ENCODE measurements at regions of chr14 and their contacts with region 1.

Region 1: GRCh38 chr14:77067632-77068514 is 30.2 kb upstream of the CIPC start:
- DNase-seq: peak; percentile 74
- H3K4me3 Mint-ChIP-seq: no peak overlapping the region
- H3K27ac Mint-ChIP-seq: no peak overlapping the region
- H3K4me1 Mint-ChIP-seq: peaks cover 23% of the 10 kb centered on the region
- H3K27me3 Mint-ChIP-seq: no peaks in the 10 kb centered on the region
- CTCF ChIP-seq: peak; percentile 87

Region 2: GRCh38 chr14:76882651-76883050 is 185.2 kb before region 1 on chr14:
- CTCF ChIA-PET with region 1: interaction called, 523 read pairs
- POLR2A ChIA-PET with region 1: no interaction called
- intact Hi-C with region 1: no loop called
- DNase-seq: no peak
- H3K4me3 Mint-ChIP-seq: no peak overlapping the region
- H3K27ac Mint-ChIP-seq: no peak overlapping the region
- H3K4me1 Mint-ChIP-seq: no peaks in the 10 kb centered on the region
- H3K27me3 Mint-ChIP-seq: no peaks in the 10 kb centered on the region
- CTCF ChIP-seq: no peak

Region 3: DNA sequence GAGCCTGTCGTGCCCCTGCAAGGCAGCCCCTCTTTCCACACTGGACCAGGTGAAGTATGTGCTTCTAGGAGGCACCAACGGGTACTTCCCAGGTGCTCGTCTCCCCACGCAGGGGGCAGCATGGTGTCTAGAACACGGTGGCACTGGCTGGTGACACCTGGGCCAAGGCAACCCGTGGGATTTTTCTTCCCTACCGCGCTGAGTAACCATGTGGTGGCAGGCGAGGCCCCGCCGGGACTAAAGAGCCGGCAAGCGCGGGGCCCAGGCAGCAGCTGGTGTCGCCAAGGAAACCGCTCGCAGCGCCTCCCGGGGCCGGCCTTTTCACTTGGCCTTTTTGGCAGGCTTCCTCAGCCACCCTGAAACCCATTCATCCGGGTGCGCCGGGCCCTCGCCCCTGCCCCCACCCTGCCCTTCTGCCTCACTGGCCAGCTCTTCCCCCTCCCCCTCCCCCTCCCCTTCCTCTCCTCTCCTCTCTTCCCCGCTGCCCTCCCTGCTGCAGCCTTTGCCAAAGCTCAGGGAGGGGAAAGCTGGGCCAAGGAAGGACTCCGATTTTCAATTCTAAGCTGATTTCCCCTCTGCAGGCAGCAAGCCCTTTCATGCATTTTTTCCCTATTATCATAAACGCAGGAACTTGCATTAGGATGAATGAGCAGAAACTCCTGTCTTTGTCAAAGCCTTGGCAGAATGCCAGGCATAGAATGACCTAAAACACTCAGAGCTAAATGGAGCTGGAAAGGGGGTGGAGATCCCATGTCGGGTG is 120.6 kb before region 1 on chr14:
- CTCF ChIA-PET with region 1: interaction called, 12 read pairs
- POLR2A ChIA-PET with region 1: interaction called, 4 read pairs
- intact Hi-C with region 1: loop called (anchors 1 kb)
- DNase-seq: peak; percentile 88
- H3K4me3 Mint-ChIP-seq: peak overlapping the region; percentile 31
- H3K27ac Mint-ChIP-seq: peak overlapping the region; percentile 94
- H3K4me1 Mint-ChIP-seq: peaks cover 28% of the 10 kb centered on the region
- H3K27me3 Mint-ChIP-seq: no peaks in the 10 kb centered on the region
- CTCF ChIP-seq: peak; percentile 31

Region 4: DNA sequence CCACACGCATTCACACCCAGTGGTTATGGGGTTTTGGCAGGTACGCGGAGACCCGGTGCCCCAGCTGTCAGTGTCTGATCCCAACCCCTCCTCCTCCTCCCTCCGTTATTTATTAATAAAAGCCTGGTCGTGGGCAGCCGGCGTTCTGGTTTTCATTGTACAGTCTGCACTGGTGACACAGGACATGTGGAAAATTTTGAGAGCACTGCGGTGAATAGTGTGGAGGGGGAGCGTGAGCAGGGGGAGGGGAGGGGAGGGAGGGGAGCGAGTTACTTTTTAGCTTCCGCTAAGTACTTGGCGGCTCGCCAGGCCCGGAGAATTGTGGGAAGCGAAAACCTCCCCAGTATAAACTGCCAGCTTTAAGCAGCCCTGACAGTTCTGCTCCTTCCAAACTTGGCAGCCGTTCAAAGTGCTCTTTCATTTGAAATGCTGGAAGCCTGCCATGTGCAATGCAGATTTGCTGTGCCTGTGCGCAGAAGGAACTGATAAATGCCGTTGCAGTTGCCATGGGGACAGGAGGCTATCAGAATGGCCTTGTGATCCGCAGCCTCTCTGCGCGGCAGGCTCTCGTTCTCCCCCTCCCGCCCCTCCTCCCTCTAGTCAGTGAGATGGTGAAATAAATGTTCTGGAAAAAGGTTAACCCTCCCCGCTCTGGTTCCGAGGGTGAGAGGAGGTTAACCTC is 27.7 kb before region 1 on chr14:
- CTCF ChIA-PET with region 1: interaction called, 35 read pairs
- POLR2A ChIA-PET with region 1: interaction called, 8 read pairs
- intact Hi-C with region 1: no loop called
- DNase-seq: peak; percentile 99
- H3K4me3 Mint-ChIP-seq: peak overlapping the region; percentile 54
- H3K27ac Mint-ChIP-seq: peak overlapping the region; percentile 82
- H3K4me1 Mint-ChIP-seq: peaks cover 59% of the 10 kb centered on the region
- H3K27me3 Mint-ChIP-seq: no peaks in the 10 kb centered on the region
- CTCF ChIP-seq: no peak

Region 5: GRCh38 chr14:77097700-77098528 is 30.0 kb after region 1 on chr14 and contains the start of gene CIPC:
- CTCF ChIA-PET with region 1: interaction called, 188 read pairs
- POLR2A ChIA-PET with region 1: interaction called, 6 read pairs
- intact Hi-C with region 1: loop called (anchors 1 kb)
- DNase-seq: peak; percentile 99
- H3K4me3 Mint-ChIP-seq: peak within 1 kb of the TSS; percentile 98
- H3K27ac Mint-ChIP-seq: peak within 1 kb of the TSS; percentile 99
- H3K4me1 Mint-ChIP-seq: peaks cover 43% of the 10 kb centered on the region
- H3K27me3 Mint-ChIP-seq: no peaks in the 10 kb centered on the region
- CTCF ChIP-seq: no peak
- total RNA-seq, gene CIPC: 9.7 and 11.4 TPM in 2 replicates